Dendritic cell treated with granulocyte-macrophage colony-stimulating factor and Interleukin-4, amounts not matched to agents 40 ng/mL and 50 ng/mL, for 4 days (primary cell): ENCODE measurements at regions of chr18 and their contacts with region 1.

Region 1: DNA sequence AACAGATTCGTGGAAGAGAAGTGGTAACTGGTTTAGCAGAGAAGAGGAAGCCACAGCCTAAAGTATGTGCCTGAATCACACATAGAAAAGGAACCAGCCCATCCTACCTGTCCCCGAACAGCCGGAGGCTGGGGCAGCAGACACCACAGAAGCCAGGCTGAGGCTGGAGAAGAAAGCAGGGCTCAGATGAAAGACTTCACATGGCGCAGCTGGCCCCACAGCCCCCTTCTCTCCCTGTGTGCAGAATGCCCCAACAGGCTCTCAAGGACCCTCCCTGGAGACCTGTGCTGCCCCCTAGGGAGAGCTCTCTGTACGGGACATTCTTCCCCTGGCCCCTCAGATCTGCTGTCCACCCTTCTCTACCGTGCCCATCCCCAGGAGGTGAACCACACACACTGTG is 83.5 kb upstream of the RAB12 start:
- H3K4me3 Mint-ChIP-seq: no peak overlapping the region
- H3K27ac Mint-ChIP-seq: peak overlapping the region; percentile 56
- H3K4me1 Mint-ChIP-seq: peaks cover 47% of the 10 kb centered on the region
- H3K27me3 Mint-ChIP-seq: peaks cover 11% of the 10 kb centered on the region

Region 2: GRCh38 chr18:8167036-8167435 is 358.7 kb before region 1 on chr18:
- intact Hi-C with region 1: no loop called
- H3K4me3 Mint-ChIP-seq: no peak overlapping the region
- H3K27ac Mint-ChIP-seq: no peak overlapping the region
- H3K4me1 Mint-ChIP-seq: no peaks in the 10 kb centered on the region
- H3K27me3 Mint-ChIP-seq: no peaks in the 10 kb centered on the region

Region 3: DNA sequence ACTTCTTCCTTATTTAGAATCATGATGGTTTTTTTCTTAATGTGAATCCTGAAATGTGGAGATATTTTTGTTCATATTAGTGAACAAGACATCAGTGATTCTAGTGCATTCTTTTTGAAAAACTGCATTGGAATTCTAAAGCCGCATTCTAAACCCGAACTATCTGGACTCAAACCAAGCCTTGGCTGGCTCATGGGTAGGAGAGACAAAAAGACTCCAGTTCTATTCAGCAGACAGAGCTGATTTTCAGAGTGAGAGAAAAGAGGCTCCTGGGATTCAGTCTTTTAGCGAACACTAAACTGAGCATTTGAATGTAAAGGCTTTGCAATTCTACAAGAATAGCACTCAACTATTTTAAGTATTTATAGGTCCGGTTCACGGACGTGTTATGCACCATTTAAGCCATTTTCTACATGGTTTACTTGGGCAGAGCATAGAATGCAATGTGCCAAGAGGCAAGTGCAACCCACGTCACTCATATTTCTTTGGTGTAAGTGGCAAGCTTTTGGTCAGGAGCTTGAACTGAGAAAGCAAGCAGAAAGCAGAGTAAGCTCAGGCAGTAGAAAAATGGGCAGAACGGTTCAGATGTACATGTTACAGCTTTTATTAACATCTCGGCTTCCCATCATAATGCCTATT is 143.8 kb before region 1 on chr18:
- intact Hi-C with region 1: no loop called
- H3K4me3 Mint-ChIP-seq: no peak overlapping the region
- H3K27ac Mint-ChIP-seq: no peak overlapping the region
- H3K4me1 Mint-ChIP-seq: no peaks in the 10 kb centered on the region
- H3K27me3 Mint-ChIP-seq: no peaks in the 10 kb centered on the region

Region 4: GRCh38 chr18:8608795-8609658 is 83.3 kb after region 1 on chr18 and contains the start of gene RAB12:
- intact Hi-C with region 1: loop called (anchors 10 kb)
- H3K4me3 Mint-ChIP-seq: peak within 1 kb of the TSS; percentile 84
- H3K27ac Mint-ChIP-seq: peak within 1 kb of the TSS; percentile 87
- H3K4me1 Mint-ChIP-seq: peaks cover 39% of the 10 kb centered on the region
- H3K27me3 Mint-ChIP-seq: peaks cover 8% of the 10 kb centered on the region